Dorsolateral prefrontal cortex (tissue), 120 donors: ENCODE measurements at regions of chr16 and their contacts with region 1.

Region 1: DNA sequence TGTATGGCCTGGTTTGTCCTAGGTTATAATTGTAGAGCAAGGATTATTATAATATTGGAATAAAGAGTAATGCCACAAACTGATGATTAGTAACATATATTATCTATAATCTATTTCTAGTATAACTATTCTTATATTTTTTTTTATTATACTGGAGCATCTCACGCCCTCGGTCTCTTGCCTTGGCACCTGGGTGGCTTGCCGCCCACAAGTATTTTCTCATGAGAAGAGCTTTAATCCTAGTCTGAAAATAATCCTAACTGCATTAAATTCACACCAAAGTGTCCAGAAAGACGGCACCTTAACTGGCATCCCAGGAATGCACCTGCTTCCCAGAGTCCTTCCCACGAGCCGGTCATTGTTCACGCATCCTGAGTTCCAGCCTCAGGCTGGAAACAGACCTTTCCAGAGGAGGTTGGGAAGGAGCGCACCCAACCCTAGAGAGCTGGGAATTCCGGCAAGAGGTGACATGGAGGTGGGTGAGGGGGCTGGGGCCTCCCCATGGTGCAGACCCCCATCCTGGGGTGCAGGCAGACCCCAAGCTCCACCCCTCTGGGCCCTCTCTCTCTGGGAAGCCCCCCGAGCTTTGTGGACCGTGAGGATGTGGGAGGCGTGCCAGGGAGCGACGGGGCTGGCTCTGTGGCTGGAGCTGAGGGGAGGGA is 15.9 kb downstream of the CHMP1A start:
- DNase-seq: no peak
- H3K4me3 ChIP-seq: peak overlapping the region in 43 of 59 donors; percentile 14 to 72 (median 52)
- H3K27ac ChIP-seq: peak overlapping the region in 11 of 59 donors; percentile 5 to 74 (median 52)
- H3K27me3 ChIP-seq: peaks cover 0 to 8% (median 0%) of the 10 kb centered on the region in 45 donors
- CTCF ChIP-seq: peak in 6 of 56 donors; percentile 2 to 25 (median 8)

Region 2: GRCh38 chr16:89256651-89257254 is 384.8 kb before region 1 on chr16:
- intact Hi-C with region 1: loop called in 1 of 2 experiments (anchors 10 kb)
- DNase-seq: peak; percentile 45 to 91 (median 72)
- H3K4me3 ChIP-seq: peak overlapping the region; percentile 34 to 72 (median 59)
- H3K27ac ChIP-seq: peak overlapping the region in 36 of 59 donors; percentile 1 to 79 (median 58)
- H3K27me3 ChIP-seq: no peaks in the 10 kb centered on the region
- CTCF ChIP-seq: peak in 3 of 56 donors; percentile 5 to 26 (median 15)

Region 3: GRCh38 chr16:89785523-89786155 is 144.1 kb after region 1 on chr16:
- intact Hi-C with region 1: no loop called
- DNase-seq: no peak
- H3K4me3 ChIP-seq: no peak overlapping the region
- H3K27ac ChIP-seq: no peak overlapping the region
- H3K27me3 ChIP-seq: no peaks in the 10 kb centered on the region
- CTCF ChIP-seq: no peak

Region 4: DNA sequence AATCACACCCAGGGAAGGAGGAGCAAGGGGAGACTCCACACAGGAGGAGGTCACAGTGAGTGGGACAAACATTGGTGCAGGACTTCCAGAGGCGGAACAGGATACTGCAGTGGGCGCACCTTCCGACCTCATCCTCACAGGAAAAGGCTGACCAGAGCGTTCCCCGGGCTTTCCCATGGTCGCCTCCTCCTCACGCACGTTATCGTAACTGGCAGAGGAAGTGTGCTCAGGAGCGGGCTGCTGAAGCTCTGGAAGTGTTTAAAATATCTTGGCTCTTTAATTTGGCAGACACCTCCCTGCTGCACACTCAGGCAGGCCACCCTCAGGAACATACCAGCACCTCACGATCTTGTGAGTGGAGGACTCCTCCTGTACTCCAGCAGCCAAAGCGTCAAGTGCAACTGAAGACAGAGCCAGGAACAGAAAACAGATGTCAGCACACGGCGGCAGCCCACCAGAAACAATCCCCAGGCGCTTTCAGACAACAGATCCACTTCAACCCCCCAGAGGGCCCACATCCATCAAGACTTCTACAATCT is 157.3 kb after region 1 on chr16:
- intact Hi-C with region 1: no loop called
- DNase-seq: peak in 3 of 10 donors; percentile 16 to 46 (median 44)
- H3K4me3 ChIP-seq: no peak overlapping the region
- H3K27ac ChIP-seq: peak overlapping the region in 33 of 59 donors; percentile 1 to 73 (median 39)
- H3K27me3 ChIP-seq: no peaks in the 10 kb centered on the region
- CTCF ChIP-seq: no peak